Heart left ventricle (tissue), 16 donors: ENCODE measurements at regions of chr10 and their contacts with region 1.

Region 1: DNA sequence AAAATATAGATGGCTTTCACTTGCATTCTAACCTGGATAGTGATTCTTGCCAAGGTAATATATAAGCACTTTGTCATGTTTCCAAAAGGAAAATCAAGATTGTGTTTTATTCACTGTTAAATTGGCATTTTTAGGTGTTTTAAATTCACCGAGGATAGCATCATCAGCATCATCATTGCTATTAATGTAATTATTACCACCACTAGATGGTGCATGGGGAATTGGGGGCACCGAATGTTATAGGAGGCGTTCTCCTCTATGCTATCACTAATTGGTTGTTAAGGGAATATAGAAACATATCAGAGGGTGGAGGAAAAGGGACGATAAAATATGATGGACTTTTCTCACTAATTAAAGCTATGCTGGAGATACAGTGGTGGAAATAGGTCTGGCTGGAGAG is 95.5 kb downstream of the CELF2 start:
- DNase-seq: no peak
- ATAC-seq: no peak
- H3K4me3 ChIP-seq: no peak overlapping the region
- H3K27ac ChIP-seq: peak overlapping the region in 3 of 12 donors; percentile 35 to 81 (median 80)
- H3K4me1 ChIP-seq: peaks cover 6 to 75% (median 31%) of the 10 kb centered on the region in 12 donors
- H3K27me3 ChIP-seq: no peaks in the 10 kb centered on the region
- CTCF ChIP-seq: peak in 8 of 12 donors; percentile 20 to 48 (median 33)
- POLR2A ChIP-seq: no peak

Region 2: GRCh38 chr10:10699427-10699826 is 413.7 kb before region 1 on chr10:
- intact Hi-C with region 1: no loop called
- DNase-seq: no peak
- ATAC-seq: no peak
- H3K4me3 ChIP-seq: no peak overlapping the region
- H3K27ac ChIP-seq: no peak overlapping the region
- H3K4me1 ChIP-seq: peaks cover 0 to 3% (median 0%) of the 10 kb centered on the region in 12 donors
- H3K27me3 ChIP-seq: no peaks in the 10 kb centered on the region
- CTCF ChIP-seq: no peak
- POLR2A ChIP-seq: no peak

Region 3: DNA sequence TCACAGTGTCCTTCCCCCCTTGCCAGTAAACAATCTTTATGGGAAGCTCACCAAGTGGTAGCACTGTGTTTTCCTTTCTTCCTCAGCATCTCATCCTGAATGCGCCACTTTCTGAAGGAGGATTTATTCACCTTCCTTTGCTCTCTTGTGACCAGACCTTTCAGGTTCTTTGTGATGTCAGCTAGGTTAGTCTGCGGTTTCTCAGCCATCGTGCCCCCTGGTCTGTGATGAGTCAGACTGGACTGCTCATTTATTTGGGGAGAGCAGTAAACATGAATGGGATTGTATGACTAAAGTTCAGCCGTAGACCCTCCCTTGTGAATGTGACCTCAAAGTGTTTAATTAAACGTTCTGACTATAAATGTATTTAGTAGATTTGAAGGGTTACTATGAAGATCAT is 330.6 kb before region 1 on chr10:
- intact Hi-C with region 1: no loop called
- DNase-seq: no peak
- ATAC-seq: no peak
- H3K4me3 ChIP-seq: no peak overlapping the region
- H3K27ac ChIP-seq: no peak overlapping the region
- H3K4me1 ChIP-seq: peaks cover 0 to 16% (median under 1%) of the 10 kb centered on the region in 12 donors
- H3K27me3 ChIP-seq: no peaks in the 10 kb centered on the region
- CTCF ChIP-seq: no peak
- POLR2A ChIP-seq: no peak

Region 4: GRCh38 chr10:11472158-11472753 is 359.1 kb after region 1 on chr10:
- intact Hi-C with region 1: loop called in 1 of 10 experiments (anchors 10 kb)
- DNase-seq: peak; percentile 45 to 78 (median 46)
- ATAC-seq: peak; percentile 47 to 93 (median 90)
- H3K4me3 ChIP-seq: no peak overlapping the region
- H3K27ac ChIP-seq: no peak overlapping the region
- H3K4me1 ChIP-seq: peaks cover 0 to 4% (median 0%) of the 10 kb centered on the region in 12 donors
- H3K27me3 ChIP-seq: no peaks in the 10 kb centered on the region
- CTCF ChIP-seq: peak; percentile 78 to 92 (median 86)
- POLR2A ChIP-seq: no peak